Activated CD8-positive, alpha-beta T cell treated with anti-CD3 and anti-CD28 coated beads for 36 hours (primary cell): ENCODE measurements at regions of chr1 and their contacts with region 1.

Region 1: DNA sequence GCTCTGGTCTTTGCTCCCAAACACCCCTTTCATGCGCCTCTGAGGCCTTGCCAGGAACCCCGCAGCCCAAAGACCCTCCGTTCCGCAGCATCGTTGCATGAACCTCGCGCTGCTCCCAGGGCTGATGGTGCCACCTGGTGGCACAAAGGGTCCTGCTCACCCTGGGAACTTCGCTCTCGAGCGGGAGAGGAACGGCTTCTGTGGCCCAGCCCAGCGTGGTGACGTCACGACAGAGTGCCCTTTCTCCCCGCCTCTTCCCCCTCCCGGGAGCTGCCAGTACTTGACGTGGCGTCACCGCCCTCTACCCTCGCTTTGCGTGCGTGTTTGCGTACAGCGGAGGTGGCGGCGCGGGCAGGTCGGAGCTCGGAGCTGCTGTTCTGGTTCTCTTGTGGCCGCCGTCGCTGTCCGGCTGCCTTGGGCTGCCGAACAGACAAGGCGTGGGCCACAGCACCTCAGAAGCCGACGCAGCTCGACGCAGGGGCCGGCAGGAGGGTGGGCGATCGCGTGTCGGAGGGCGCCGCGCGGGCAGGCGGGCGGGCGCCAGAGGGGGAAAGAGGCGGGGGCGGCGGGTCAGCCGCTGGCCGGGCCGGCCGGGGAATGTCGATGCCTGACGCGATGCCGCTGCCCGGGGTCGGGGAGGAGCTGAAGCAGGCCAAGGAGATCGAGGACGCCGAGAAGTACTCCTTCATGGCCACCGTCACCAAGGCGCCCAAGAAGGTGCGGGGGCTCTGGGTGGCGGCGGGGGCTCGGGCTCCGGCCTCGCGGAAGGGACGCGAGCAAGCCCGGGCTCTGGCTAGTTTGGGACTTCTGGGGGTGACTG is at the start of gene AHCYL1:
- DNase-seq: peak; percentile 100
- ATAC-seq: peak; percentile 99
- H3K4me3 Mint-ChIP-seq: peak within 1 kb of the TSS; percentile 98
- H3K27ac Mint-ChIP-seq: peak within 1 kb of the TSS; percentile 98
- H3K4me1 Mint-ChIP-seq: peaks cover 33% of the 10 kb centered on the region
- H3K27me3 Mint-ChIP-seq: no peaks in the 10 kb centered on the region
- CTCF ChIP-seq: peak; percentile 84
- total RNA-seq, gene AHCYL1: 77.8 to 79.1 TPM

Region 2: DNA sequence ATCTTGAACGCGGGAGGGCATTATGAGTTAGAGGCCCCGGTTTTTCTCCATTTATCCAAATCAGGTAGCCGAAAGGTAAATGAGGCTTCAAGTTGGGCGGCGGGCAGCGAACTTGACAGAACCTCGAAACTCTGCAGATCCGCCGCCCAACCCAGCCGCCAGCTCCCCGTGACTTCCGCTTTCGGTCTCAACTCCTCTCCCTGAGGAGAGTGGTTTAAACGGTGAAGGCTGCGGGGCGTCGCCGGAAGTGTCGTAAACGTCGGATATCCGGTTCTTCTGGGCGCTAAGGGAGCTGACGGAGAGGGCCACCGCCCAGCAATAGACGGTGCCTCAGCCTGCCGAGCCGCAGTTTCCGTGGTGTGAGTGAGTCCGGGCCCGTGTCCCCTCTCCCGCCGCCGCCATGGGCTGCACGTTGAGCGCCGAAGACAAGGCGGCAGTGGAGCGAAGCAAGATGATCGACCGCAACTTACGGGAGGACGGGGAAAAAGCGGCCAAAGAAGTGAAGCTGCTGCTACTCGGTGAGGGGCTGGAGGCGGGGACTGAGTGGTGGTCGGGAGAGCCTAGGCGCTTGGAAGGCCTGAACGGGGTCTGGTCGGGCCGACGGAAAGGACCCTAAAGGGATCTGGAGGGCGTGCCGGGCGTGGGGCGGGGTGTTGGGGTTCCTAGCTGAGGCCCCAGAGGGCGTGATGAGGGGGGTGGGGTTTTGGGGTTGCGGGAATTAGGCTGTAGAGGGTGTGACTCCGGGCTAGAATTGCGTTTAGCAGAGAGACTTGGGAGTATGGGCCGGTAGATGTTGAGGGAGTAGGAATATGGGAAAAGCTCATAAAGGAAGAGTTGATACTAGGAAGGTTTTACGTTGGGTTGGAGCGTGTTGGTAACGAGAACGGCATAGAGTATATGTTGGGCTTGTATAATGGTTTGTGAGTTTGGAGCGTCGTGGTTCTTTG is 436.1 kb before region 1 on chr1 and contains the start of gene GNAI3:
- CTCF ChIA-PET with region 1: interaction called, 24 read pairs
- POLR2A ChIA-PET with region 1: interaction called, 4 read pairs
- intact Hi-C with region 1: loop called (anchors 5 kb)
- DNase-seq: peak; percentile 98
- ATAC-seq: peak; percentile 95
- H3K4me3 Mint-ChIP-seq: peak within 1 kb of the TSS; percentile 98
- H3K27ac Mint-ChIP-seq: peak within 1 kb of the TSS; percentile 96
- H3K4me1 Mint-ChIP-seq: peaks cover 40% of the 10 kb centered on the region
- H3K27me3 Mint-ChIP-seq: no peaks in the 10 kb centered on the region
- CTCF ChIP-seq: no peak
- total RNA-seq, gene GNAI3: 7.5 to 7.7 TPM

Region 3: DNA sequence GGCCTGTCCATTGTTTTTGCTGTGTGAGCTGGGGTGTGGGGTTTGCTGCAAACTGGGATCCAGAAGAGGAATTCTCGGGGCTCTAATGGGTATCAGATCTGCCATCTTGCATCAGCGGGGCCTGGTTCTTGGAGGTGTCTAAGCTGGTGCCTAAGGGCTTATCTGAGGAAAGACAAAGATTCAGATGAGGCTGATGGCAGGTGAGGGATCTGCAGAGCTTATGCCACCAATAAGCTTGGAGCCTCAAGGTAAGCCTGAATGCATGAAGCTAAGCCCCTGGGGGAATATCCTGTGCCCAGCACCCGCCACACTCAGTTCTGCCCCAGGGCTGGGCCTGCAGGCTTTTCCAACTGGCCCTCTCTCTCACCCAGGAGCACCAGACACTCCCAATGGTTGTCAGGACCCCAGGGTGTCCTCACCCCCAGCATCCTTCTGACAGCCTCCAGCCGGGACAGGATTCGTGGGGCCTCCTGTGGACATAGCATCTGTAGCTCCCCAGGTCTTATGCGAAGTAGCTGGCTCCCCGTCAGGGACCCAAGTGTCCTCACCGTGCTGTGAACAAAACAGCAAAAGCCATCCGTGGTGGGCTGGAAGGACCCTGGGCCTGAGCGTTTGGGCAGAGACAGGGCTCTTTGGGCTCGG is 234.3 kb before region 1 on chr1:
- CTCF ChIA-PET with region 1: interaction called, 10 read pairs
- POLR2A ChIA-PET with region 1: no interaction called
- intact Hi-C with region 1: no loop called
- DNase-seq: no peak
- ATAC-seq: no peak
- H3K4me3 Mint-ChIP-seq: no peak overlapping the region
- H3K27ac Mint-ChIP-seq: no peak overlapping the region
- H3K4me1 Mint-ChIP-seq: no peaks in the 10 kb centered on the region
- H3K27me3 Mint-ChIP-seq: peaks cover 12% of the 10 kb centered on the region
- CTCF ChIP-seq: no peak

Region 4: GRCh38 chr1:109802901-109803561 is 181.6 kb before region 1 on chr1:
- CTCF ChIA-PET with region 1: interaction called, 21 read pairs
- POLR2A ChIA-PET with region 1: no interaction called
- intact Hi-C with region 1: no loop called
- DNase-seq: no peak
- ATAC-seq: no peak
- H3K4me3 Mint-ChIP-seq: peak overlapping the region; percentile 61
- H3K27ac Mint-ChIP-seq: peak overlapping the region; percentile 97
- H3K4me1 Mint-ChIP-seq: peaks cover 58% of the 10 kb centered on the region
- H3K27me3 Mint-ChIP-seq: no peaks in the 10 kb centered on the region
- CTCF ChIP-seq: no peak

Region 5: DNA sequence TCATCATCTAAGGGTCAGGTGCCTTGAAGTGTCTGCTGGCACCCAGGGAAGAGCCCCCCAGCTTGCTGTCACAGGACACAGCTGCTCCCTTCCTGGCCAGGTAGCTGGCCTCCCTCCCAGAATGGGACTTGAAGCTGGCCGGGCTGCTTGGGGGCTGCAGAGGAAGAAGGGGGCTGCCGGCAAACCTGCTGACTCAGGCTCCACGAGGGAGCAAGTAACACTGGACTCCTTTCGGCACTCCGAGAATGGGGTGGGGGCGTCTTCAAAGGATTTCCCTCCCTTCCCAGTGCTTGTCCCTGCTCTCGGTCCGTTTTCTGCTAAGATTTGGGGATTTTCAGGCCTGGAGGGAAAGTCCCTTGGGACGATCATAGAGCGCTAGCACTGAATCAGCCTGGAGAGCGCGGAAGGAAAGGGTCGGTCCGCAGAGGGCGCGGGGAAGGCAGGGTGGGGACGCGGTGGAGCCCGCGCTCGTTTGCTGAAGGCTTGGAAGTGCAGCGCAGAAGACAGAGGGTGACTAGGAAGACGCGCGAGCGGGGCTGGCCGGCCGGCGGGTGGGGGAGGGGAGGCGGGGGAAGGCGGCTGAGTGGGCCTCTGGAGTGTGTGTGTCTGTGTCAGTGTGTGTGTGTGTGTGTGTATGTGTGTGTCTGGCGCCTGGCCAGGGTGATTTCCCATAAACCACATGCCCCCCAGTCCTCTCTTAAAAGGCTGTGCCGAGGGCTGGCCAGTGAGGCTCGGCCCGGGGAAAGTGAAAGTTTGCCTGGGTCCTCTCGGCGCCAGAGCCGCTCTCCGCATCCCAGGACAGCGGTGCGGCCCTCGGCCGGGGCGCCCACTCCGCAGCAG is 74.3 kb before region 1 on chr1 and contains the start of gene CSF1:
- CTCF ChIA-PET with region 1: interaction called, 36 read pairs
- POLR2A ChIA-PET with region 1: interaction called, 4 read pairs
- intact Hi-C with region 1: no loop called
- DNase-seq: peak; percentile 78
- ATAC-seq: peak; percentile 41
- H3K4me3 Mint-ChIP-seq: peak within 1 kb of the TSS; percentile 90
- H3K27ac Mint-ChIP-seq: peak within 1 kb of the TSS; percentile 95
- H3K4me1 Mint-ChIP-seq: peaks cover 70% of the 10 kb centered on the region
- H3K27me3 Mint-ChIP-seq: no peaks in the 10 kb centered on the region
- CTCF ChIP-seq: no peak
- total RNA-seq, gene CSF1: 28.3 to 33.3 TPM

Region 6: DNA sequence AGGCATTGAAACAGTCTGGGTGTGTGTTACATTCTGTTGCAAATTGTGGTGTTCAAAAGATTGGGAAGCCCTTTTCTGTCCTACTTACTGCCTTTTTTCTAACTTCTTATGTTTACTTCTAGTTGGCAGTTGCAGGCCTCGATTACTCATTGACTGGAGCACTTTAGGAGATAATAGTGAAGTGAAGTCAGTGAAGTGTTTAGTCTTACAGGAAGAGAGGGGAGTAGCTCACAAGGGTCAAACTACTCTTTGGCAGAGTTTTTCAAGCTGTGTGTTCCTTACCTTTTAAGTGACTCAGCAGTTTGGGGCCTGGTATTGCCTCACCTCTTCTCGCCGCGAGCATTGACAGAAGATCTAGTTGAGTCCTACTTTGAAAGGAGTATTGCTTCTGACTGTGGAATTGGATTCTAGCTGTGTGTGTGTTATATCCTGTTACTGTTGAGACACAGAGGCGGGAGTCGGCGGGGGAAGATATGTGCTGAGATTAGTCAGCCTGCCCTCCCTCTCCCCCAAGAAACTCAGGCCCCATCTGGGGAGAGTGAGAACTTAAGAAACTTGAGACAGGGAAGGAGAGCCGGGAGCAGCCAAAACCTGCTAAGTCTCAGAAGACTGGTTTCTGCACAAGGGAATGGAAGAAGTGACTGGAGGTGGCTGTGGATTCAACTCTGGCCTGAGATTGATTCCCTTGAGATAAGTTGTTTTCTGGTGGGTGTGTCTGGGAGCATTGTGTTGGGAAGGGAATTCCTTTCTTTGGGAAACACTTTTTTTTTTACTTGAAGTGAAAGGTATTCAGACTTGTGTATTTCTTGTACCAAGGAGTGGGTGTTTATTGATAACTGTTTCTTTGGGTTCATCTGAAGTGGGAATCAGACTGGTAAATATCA is 19.3 kb after region 1 on chr1:
- CTCF ChIA-PET with region 1: interaction called, 34 read pairs
- POLR2A ChIA-PET with region 1: interaction called, 3 read pairs
- intact Hi-C with region 1: no loop called
- DNase-seq: peak; percentile 68
- ATAC-seq: peak; percentile 87
- H3K4me3 Mint-ChIP-seq: no peak overlapping the region
- H3K27ac Mint-ChIP-seq: peak overlapping the region; percentile 61
- H3K4me1 Mint-ChIP-seq: peaks cover 26% of the 10 kb centered on the region
- H3K27me3 Mint-ChIP-seq: no peaks in the 10 kb centered on the region
- CTCF ChIP-seq: no peak

Region 7: DNA sequence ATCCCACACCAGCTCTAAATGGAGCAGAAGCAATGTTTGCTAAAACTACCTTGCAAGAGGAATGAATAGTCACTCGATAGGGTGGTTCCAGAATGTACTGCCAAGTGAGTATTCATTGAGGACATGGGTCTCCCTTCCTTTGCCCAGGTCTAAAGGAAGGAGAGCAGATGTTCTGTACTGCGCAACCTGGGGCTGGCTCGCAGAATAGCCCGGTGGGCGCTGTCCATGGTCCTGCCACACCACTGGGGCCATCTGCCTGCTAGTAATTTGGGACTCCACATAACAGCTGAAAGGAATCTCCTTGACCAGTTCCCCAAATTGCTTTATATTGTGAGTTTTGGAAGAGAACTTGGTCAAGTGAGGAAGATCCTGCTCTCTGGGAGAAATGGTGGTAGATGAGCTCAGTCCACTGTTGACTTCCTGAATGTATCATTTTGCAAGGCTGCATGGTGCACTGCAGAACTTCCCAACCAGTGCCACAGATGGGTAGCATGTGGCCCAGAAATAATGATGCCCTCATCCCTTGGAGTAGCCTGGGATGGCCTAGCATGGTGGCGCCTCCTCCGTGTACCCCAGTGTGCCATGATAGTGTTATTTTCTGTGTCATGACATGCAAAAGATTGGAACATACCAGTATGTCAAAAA is 171.3 kb after region 1 on chr1:
- CTCF ChIA-PET with region 1: no interaction called
- POLR2A ChIA-PET with region 1: no interaction called
- intact Hi-C with region 1: no loop called
- DNase-seq: peak; percentile 70
- ATAC-seq: peak; percentile 66
- H3K4me3 Mint-ChIP-seq: no peak overlapping the region
- H3K27ac Mint-ChIP-seq: no peak overlapping the region
- H3K4me1 Mint-ChIP-seq: peaks cover 5% of the 10 kb centered on the region
- H3K27me3 Mint-ChIP-seq: peaks cover 50% of the 10 kb centered on the region
- CTCF ChIP-seq: no peak

Region 8: GRCh38 chr1:110170766-110171733 is 186.4 kb after region 1 on chr1:
- CTCF ChIA-PET with region 1: no interaction called
- POLR2A ChIA-PET with region 1: no interaction called
- intact Hi-C with region 1: no loop called
- DNase-seq: no peak
- ATAC-seq: no peak
- H3K4me3 Mint-ChIP-seq: no peak overlapping the region
- H3K27ac Mint-ChIP-seq: no peak overlapping the region
- H3K4me1 Mint-ChIP-seq: no peaks in the 10 kb centered on the region
- H3K27me3 Mint-ChIP-seq: peaks cover 2% of the 10 kb centered on the region
- CTCF ChIP-seq: no peak

Region 9: DNA sequence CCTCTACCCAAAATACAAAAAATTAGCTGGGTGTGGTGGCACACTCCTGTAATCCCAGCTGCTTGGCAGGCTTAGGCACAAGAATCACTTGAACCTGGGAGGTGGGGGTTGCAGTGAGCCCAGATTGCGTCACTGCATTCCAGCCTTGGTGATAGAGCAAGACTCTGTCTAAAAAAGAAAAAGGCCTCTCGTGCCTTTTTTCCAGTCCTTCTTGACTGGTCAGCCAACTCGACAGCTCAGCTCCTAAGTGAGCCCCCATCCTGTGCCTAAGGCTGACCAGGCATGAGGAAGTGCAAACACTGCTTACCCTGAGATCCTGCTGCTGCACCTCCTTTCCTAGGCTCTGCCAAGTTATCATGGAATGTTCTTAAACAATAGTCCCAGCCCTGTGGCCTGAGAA is 456.2 kb after region 1 on chr1:
- CTCF ChIA-PET with region 1: no interaction called
- POLR2A ChIA-PET with region 1: no interaction called
- intact Hi-C with region 1: no loop called
- DNase-seq: no peak
- ATAC-seq: no peak
- H3K4me3 Mint-ChIP-seq: no peak overlapping the region
- H3K27ac Mint-ChIP-seq: no peak overlapping the region
- H3K4me1 Mint-ChIP-seq: no peaks in the 10 kb centered on the region
- H3K27me3 Mint-ChIP-seq: peaks cover 2% of the 10 kb centered on the region
- CTCF ChIP-seq: no peak